Ovary (tissue), 10 donors: ENCODE measurements at regions of chr12 and their contacts with region 1.

Region 1: DNA sequence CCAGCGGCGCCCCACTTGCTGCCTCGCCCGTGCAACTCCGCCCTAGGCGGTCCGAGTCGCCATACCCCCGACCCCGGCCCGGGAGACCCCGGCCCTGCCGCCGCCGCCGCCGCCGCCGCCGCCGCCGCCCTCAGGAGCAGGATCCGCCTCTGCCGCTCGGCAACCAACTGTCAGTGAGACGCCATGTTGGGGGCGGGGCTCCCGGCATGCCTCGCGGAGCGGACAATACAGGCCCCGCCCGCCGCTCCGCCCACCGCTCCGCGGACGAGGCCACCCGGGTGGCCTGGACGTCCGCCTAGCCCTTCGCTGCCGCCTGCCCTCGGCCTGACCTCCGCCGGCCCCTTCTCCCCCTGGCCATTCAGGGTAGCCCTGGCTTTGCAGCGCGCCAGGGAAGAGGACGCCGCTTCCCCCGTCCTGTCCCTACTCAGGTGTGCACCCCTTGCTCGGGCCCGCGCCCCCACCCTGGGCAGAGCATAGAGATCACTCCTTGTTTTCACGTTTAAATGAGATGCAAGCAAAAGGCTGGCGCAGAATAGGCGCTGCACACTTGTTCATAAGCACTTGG is at the start of gene HECTD4:
- DNase-seq: peak; percentile 92 to 98 (median 93)
- H3K4me3 ChIP-seq: peak within 1 kb of the TSS; percentile 64
- H3K27ac ChIP-seq: peak within 1 kb of the TSS; percentile 61 to 67
- H3K4me1 ChIP-seq: peaks cover 7% of the 10 kb centered on the region
- H3K27me3 ChIP-seq: no peaks in the 10 kb centered on the region
- CTCF ChIP-seq: no peak
- EP300 ChIP-seq: no peak
- POLR2A ChIP-seq: peak; percentile 38
- total RNA-seq, gene HECTD4: 25.3 to 47.3 (median 37.2) TPM

Region 2: GRCh38 chr12:111937429-111937828 is 444.9 kb before region 1 on chr12:
- intact Hi-C with region 1: loop called in 1 of 4 experiments (anchors 10 kb)
- DNase-seq: no peak
- H3K4me3 ChIP-seq: no peak overlapping the region
- H3K27ac ChIP-seq: no peak overlapping the region
- H3K4me1 ChIP-seq: no peaks in the 10 kb centered on the region
- H3K27me3 ChIP-seq: no peaks in the 10 kb centered on the region
- CTCF ChIP-seq: no peak
- EP300 ChIP-seq: no peak
- POLR2A ChIP-seq: no peak

Region 3: GRCh38 chr12:112198120-112198733 is 184.1 kb before region 1 on chr12:
- intact Hi-C with region 1: loop called in 2 of 4 experiments (anchors 5 kb)
- DNase-seq: peak; percentile 27 to 59 (median 44)
- H3K4me3 ChIP-seq: no peak overlapping the region
- H3K27ac ChIP-seq: no peak overlapping the region
- H3K4me1 ChIP-seq: peaks cover 7% of the 10 kb centered on the region
- H3K27me3 ChIP-seq: no peaks in the 10 kb centered on the region
- CTCF ChIP-seq: peak in 1 of 3 donors; percentile 11
- EP300 ChIP-seq: no peak
- POLR2A ChIP-seq: no peak

Region 4: GRCh38 chr12:112750971-112751370 is 368.7 kb after region 1 on chr12:
- intact Hi-C with region 1: no loop called
- DNase-seq: no peak
- H3K4me3 ChIP-seq: no peak overlapping the region
- H3K27ac ChIP-seq: no peak overlapping the region
- H3K4me1 ChIP-seq: no peaks in the 10 kb centered on the region
- H3K27me3 ChIP-seq: no peaks in the 10 kb centered on the region
- CTCF ChIP-seq: no peak
- EP300 ChIP-seq: no peak
- POLR2A ChIP-seq: no peak